Colonic mucosa (tissue), 4 donors: ENCODE measurements at regions of chr9 and their contacts with region 1.

Region 1: GRCh38 chr9:113853324-113853723 is 22.8 kb upstream of the ZNF618 start:
- DNase-seq: no peak
- H3K4me3 ChIP-seq: no peak overlapping the region
- H3K27ac ChIP-seq: no peak overlapping the region
- H3K4me1 ChIP-seq: no peaks in the 10 kb centered on the region
- H3K27me3 ChIP-seq: no peaks in the 10 kb centered on the region
- CTCF ChIP-seq: peak; percentile 24

Region 2: DNA sequence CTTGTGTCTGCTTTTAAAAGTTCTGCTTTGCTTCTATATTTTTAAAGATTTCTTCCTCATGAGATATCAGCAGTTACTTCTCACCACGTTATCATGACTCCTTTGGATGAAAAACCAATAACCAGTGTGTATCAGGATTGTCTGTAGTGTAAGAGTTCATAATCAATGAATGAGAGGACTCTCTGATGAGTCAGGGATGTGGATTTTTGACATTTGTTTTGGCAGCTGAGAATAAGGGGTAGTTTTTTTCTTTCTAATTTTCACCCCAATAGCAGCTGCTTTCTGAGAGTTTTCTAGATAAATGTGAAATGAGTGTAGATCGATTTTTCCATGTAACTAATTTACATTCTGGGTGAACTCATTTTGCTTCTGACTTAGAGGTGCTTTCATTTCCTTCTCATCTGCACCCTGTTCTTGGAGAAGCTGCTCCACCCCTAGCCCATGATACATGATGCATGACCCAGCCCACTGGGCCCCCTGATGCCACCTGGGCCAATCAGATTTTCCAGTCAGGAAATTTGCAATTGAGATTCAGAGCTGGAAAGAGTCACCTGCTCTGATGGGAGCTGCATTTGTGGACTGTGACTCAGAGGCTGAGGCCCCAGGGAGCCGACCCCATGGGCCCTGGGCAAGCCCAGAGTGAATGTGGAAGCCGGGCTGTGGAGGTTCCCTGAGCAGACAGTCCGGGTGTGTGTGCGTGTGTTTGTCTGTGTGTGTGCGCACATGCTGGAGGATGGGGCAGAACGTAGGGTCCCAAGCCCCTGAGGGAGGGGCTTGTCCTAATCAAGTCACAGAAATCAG is 230.5 kb before region 1 on chr9:
- intact Hi-C with region 1: no loop called
- DNase-seq: no peak
- H3K4me3 ChIP-seq: no peak overlapping the region
- H3K27ac ChIP-seq: no peak overlapping the region
- H3K4me1 ChIP-seq: no peaks in the 10 kb centered on the region
- H3K27me3 ChIP-seq: no peaks in the 10 kb centered on the region
- CTCF ChIP-seq: no peak

Region 3: GRCh38 chr9:113913426-113914195 is 60.3 kb after region 1 on chr9:
- intact Hi-C with region 1: no loop called
- DNase-seq: no peak
- H3K4me3 ChIP-seq: no peak overlapping the region
- H3K27ac ChIP-seq: no peak overlapping the region
- H3K4me1 ChIP-seq: no peaks in the 10 kb centered on the region
- H3K27me3 ChIP-seq: no peaks in the 10 kb centered on the region
- CTCF ChIP-seq: no peak

Region 4: DNA sequence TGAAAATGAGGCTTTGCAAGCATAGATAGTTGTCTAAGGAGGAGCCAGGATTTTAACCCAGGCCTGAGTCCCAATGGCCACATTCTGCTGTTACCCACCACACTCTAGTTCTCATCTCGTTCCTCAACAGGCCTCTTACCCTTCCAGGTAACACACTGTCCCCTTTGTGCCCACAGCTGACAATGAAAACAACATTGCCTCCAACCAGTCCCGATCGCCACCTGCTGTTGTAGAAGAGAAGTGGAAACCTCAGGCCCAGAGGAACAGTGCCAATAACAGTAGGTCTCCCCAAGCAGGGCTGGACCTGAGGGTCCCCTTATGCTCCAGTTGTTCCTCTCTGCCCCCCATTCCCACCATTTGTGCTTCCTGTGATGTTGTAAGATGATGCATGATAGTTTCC is 194.4 kb after region 1 on chr9:
- intact Hi-C with region 1: loop called (anchors 5 kb)
- DNase-seq: peak; percentile 38
- H3K4me3 ChIP-seq: no peak overlapping the region
- H3K27ac ChIP-seq: no peak overlapping the region
- H3K4me1 ChIP-seq: no peaks in the 10 kb centered on the region
- H3K27me3 ChIP-seq: no peaks in the 10 kb centered on the region
- CTCF ChIP-seq: peak; percentile 50

Region 5: DNA sequence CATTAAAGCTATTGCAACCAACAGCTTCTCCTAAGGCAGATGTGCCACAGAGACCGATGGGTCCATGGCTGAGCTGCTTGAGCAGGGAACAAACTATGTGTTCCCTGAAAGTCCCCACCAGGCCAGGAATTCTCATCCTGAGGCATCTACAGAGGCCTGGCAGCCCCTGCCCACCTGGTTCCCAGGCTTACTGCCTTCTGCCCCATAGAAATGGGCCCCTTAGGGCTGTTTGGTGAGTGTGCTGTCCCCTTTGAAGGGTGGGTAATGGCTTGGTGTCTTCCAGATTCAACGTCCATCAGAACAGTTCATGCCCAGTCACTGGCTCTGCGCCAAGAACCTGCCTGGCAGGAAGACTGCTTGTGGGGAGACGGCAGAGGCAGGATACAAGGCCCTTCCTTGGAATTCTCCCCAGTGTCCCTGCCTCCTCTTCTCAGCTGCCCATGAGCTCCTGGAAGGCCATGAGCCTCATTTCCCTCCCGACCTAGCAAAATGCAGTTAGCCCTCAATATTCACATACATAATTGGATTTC is 298.2 kb after region 1 on chr9:
- intact Hi-C with region 1: no loop called
- DNase-seq: no peak
- H3K4me3 ChIP-seq: no peak overlapping the region
- H3K27ac ChIP-seq: no peak overlapping the region
- H3K4me1 ChIP-seq: no peaks in the 10 kb centered on the region
- H3K27me3 ChIP-seq: peaks cover 31% of the 10 kb centered on the region
- CTCF ChIP-seq: no peak